Endothelial cell of umbilical vein (primary cell): ENCODE measurements at regions of chr1 and their contacts with region 1.

Region 1: GRCh38 chr1:175597969-175598765 is 145.2 kb downstream of the TNR start:
- DNase-seq: peak; percentile 83
- H3K4me3 ChIP-seq: no peak overlapping the region
- H3K27ac ChIP-seq: peak overlapping the region; percentile 96
- H3K4me1 ChIP-seq: peaks cover 27% of the 10 kb centered on the region
- H3K27me3 ChIP-seq: no peaks in the 10 kb centered on the region
- CTCF ChIP-seq: no peak
- POLR2A ChIP-seq: no peak

Region 2: GRCh38 chr1:175363031-175363430 is 235.1 kb before region 1 on chr1:
- CTCF ChIA-PET with region 1: no interaction called
- POLR2A ChIA-PET with region 1: no interaction called
- dilution Hi-C with region 1: no loop called
- intact Hi-C with region 1: loop called (anchors 1 kb)
- DNase-seq: peak; percentile 43
- H3K4me3 ChIP-seq: no peak overlapping the region
- H3K27ac ChIP-seq: peak overlapping the region; percentile 9
- H3K4me1 ChIP-seq: peaks cover 14% of the 10 kb centered on the region
- H3K27me3 ChIP-seq: peaks cover 3 to 16% of the 10 kb centered on the region in 2 experiments
- CTCF ChIP-seq: no peak
- POLR2A ChIP-seq: no peak

Region 3: DNA sequence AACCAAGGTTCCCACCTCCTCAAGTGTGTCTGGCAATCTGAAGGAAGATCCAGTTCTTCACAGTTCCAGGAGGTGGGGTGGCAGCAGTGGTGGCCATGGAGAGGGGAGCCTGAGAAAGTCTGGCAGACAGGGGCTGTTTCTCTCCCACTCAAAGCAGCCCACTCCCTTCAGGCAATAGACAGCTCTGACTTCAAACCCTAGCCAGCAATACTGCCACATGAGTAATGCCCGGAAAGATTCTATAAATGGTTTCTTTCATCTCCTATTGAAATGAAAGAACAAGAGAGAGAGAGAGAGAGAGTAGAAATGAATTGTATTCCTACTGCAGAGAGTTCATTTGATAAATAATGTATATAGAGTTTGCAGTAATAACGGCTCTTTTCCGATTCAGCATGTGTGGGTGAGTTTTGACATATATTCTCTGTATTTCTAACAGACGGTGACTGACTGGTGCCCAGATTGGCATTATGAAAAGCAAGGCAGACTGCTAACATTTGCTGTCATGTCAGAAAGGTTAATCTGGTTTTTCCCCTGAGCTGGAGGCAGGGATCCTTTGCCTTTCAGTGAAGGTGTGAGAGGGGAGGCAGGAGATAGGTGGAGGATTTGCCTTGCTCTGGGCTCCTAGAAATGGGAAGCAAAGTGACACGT is 138.5 kb before region 1 on chr1:
- CTCF ChIA-PET with region 1: no interaction called
- POLR2A ChIA-PET with region 1: no interaction called
- dilution Hi-C with region 1: no loop called
- intact Hi-C with region 1: no loop called
- DNase-seq: no peak
- H3K4me3 ChIP-seq: no peak overlapping the region
- H3K27ac ChIP-seq: no peak overlapping the region
- H3K4me1 ChIP-seq: no peaks in the 10 kb centered on the region
- H3K27me3 ChIP-seq: no peaks in the 10 kb centered on the region
- CTCF ChIP-seq: no peak
- POLR2A ChIP-seq: no peak

Region 4: GRCh38 chr1:175548774-175549173 is 49.4 kb before region 1 on chr1:
- CTCF ChIA-PET with region 1: no interaction called
- POLR2A ChIA-PET with region 1: no interaction called
- dilution Hi-C with region 1: no loop called
- intact Hi-C with region 1: loop called (anchors 2 kb)
- DNase-seq: peak; percentile 94
- H3K4me3 ChIP-seq: no peak overlapping the region
- H3K27ac ChIP-seq: peak overlapping the region; percentile 4
- H3K4me1 ChIP-seq: peaks cover 20% of the 10 kb centered on the region
- H3K27me3 ChIP-seq: no peaks in the 10 kb centered on the region
- CTCF ChIP-seq: no peak
- POLR2A ChIP-seq: no peak

Region 5: GRCh38 chr1:175673371-175674150 is 75.4 kb after region 1 on chr1:
- CTCF ChIA-PET with region 1: no interaction called
- POLR2A ChIA-PET with region 1: no interaction called
- dilution Hi-C with region 1: no loop called
- intact Hi-C with region 1: loop called (anchors 5 kb)
- DNase-seq: peak; percentile 82
- H3K4me3 ChIP-seq: no peak overlapping the region
- H3K27ac ChIP-seq: peak overlapping the region; percentile 69
- H3K4me1 ChIP-seq: peaks cover 25% of the 10 kb centered on the region
- H3K27me3 ChIP-seq: no peaks in the 10 kb centered on the region
- CTCF ChIP-seq: no peak
- POLR2A ChIP-seq: no peak